Tibial artery (tissue), 4 donors: ENCODE measurements at regions of chr3 and their contacts with region 1.

Region 1: GRCh38 chr3:50347194-50347918 is 1.8 kb upstream of the ZMYND10 start:
- DNase-seq: peak in 1 of 2 donors; percentile 62
- H3K4me3 ChIP-seq: no peak overlapping the region
- H3K27ac ChIP-seq: peak overlapping the region in 1 of 2 donors; percentile 16
- H3K4me1 ChIP-seq: peaks cover 0 to 44% (median 38%) of the 10 kb centered on the region in 4 donors
- H3K27me3 ChIP-seq: no peaks in the 10 kb centered on the region
- CTCF ChIP-seq: peak; percentile 41 to 50

Region 2: GRCh38 chr3:50388016-50388719 is 40.8 kb after region 1 on chr3:
- intact Hi-C with region 1: no loop called
- DNase-seq: no peak
- H3K4me3 ChIP-seq: no peak overlapping the region
- H3K27ac ChIP-seq: no peak overlapping the region
- H3K4me1 ChIP-seq: peaks cover 0 to 35% (median 20%) of the 10 kb centered on the region in 4 donors
- H3K27me3 ChIP-seq: no peaks in the 10 kb centered on the region
- CTCF ChIP-seq: no peak

Region 3: DNA sequence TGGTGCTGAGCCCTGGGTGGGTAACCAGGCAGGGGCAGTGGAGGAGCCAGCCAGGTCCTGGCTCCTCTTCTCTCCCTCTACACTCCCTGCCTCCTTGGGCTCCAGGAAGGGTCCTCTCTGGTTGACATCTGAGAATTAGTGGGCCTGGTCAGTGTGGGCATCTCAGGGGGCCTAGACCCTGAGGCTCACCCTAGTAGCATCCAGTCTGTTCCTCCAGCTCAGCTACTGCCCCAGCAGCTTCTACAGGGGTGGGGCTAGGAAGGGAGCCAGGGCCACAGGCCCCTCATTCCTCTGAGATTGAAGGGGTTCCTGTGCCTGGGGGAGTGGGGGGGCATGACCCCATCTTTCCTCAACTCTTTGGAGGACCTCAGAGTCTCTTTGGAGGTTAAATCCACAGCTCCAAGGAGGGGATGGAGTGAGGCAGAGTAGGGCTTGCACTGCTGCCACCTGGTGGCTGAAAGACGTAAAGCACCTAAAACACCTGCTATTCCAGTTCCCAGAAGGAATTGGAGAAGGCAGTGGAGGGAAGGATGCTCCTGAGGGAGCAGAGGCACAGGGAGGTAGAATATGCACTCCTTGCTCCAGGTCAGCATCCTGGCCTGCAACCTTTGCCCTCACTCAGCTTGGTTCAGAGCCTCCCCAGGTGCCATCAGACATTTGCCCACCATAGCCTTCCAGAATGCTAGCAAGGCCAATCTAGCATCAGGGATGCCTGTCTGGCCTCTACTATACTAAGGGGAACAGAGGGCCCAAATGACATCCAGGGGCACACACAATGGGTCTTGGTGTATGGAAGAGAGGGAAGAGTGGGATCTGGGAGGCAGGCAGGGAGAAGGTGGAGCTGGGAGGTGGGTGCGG is 195.1 kb after region 1 on chr3:
- intact Hi-C with region 1: loop called (anchors 5 kb)
- DNase-seq: peak; percentile 68 to 80
- H3K4me3 ChIP-seq: no peak overlapping the region
- H3K27ac ChIP-seq: no peak overlapping the region
- H3K4me1 ChIP-seq: no peaks in the 10 kb centered on the region
- H3K27me3 ChIP-seq: peaks cover 0 to 5% of the 10 kb centered on the region in 2 donors
- CTCF ChIP-seq: peak; percentile 86 to 89

Region 4: DNA sequence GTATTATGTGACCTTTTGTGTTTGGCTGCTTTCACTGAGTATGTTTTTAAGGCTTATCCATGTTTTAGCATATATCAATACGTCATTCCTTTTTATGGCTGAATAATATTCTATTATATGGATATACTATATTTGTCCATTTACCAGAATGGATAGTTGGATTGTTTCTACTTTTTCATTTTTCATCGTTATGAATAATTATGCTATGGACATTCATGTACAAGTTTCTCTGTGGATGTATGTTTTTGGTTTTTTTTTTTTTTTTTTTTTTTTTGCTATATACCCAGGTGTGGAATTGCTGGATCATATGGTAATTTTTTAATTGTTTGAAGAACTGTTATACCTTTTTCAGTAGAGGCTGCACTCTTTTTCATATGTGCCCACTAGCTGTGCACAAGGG is 350.9 kb after region 1 on chr3:
- intact Hi-C with region 1: no loop called
- DNase-seq: no peak
- H3K4me3 ChIP-seq: no peak overlapping the region
- H3K27ac ChIP-seq: no peak overlapping the region
- H3K4me1 ChIP-seq: no peaks in the 10 kb centered on the region
- H3K27me3 ChIP-seq: no peaks in the 10 kb centered on the region
- CTCF ChIP-seq: no peak

Region 5: GRCh38 chr3:51974963-51975851 is 1627.9 kb after region 1 on chr3 and contains the start of gene ABHD14A:
- intact Hi-C with region 1: loop called (anchors 10 kb)
- DNase-seq: peak; percentile 56 to 86
- H3K4me3 ChIP-seq: peak within 1 kb of the TSS; percentile 70 to 84
- H3K27ac ChIP-seq: peak within 1 kb of the TSS; percentile 95 to 97
- H3K4me1 ChIP-seq: peaks cover 0 to 39% (median 22%) of the 10 kb centered on the region in 4 donors
- H3K27me3 ChIP-seq: no peaks in the 10 kb centered on the region
- CTCF ChIP-seq: no peak